GM10248 (cell line): ENCODE measurements at regions of chr6 and their contacts with region 1.

Region 1: DNA sequence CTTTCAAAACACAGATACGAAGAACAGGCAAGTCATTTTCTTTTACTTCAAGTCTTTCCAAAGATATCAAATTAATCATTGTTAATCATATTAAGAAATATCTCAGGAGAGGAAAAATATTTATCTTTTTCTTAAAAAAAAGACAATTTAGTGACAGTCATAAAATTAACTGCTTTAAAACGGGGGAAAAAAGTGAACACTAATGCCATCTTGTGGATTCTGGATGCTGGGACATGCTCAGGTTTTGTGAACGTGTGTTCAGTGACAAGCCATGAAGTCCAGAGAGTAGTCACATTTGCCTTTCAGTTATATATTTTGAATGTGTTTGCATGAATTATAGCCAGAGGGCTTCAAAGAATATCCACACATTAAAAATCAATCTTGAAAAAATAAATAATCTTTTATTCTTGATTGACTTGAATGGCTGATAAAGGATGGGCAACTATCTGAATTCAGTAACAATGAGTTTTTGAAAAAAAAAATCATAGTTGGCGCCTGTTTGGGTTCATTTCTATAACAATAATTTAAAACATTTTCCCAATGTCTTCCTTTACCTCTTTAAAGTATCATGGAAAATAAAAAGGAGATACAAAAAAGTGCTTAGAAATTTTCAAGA is 74.7 kb upstream of the NOX3 start:
- DNase-seq: peak; percentile 38
- CTCF ChIP-seq: peak; percentile 71

Region 2: GRCh38 chr6:155327326-155328073 is 202.8 kb before region 1 on chr6:
- CTCF ChIA-PET with region 1: interaction called, 13 read pairs
- POLR2A ChIA-PET with region 1: no interaction called
- DNase-seq: peak; percentile 32
- CTCF ChIP-seq: peak; percentile 60

Region 3: DNA sequence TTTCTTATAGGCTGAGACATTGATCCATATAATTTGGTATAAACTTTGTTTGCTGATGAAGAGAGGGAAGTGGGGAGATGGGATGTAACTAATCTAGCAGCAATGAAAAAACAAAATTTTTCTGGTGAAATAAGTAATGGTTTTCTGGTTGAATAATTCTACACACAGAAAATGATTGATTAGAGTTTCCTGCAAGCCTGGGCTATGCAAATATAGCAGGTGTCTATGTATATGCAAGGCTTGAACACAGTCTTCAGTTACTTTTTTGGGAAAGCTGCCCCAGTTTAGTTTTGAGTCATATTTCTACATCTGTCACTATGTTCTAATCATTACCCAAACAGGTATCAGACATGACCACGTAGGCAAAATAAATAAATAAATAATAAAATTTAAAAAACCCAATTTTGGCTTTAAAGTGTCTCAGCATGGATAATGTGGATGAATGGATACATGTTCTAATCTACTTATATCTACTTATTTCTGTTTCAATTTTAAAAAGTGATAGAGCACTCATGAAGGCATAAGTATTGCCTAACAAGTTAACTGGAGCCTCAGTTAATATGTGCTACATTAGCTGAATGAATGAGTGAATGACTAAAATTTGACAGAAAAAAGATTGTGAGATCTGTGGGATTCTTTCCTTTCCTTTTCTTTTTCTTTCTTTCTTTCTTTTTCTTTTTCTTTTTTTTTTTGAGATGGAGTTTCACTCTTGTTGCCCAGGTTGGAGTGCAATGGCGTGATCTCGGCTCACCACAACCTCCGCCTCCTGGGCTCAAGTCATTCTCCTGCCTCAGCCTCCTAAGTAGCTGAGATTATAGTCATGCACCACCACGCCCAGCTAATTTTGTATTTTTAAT is 178.8 kb before region 1 on chr6:
- CTCF ChIA-PET with region 1: no interaction called
- POLR2A ChIA-PET with region 1: no interaction called
- DNase-seq: peak; percentile 75
- CTCF ChIP-seq: no peak

Region 4: GRCh38 chr6:155519339-155519738 is 11.0 kb before region 1 on chr6:
- CTCF ChIA-PET with region 1: interaction called, 10 read pairs
- POLR2A ChIA-PET with region 1: no interaction called
- DNase-seq: no peak
- CTCF ChIP-seq: no peak

Region 5: GRCh38 chr6:155580904-155581303 is 50.6 kb after region 1 on chr6:
- CTCF ChIA-PET with region 1: no interaction called
- POLR2A ChIA-PET with region 1: no interaction called
- DNase-seq: no peak
- CTCF ChIP-seq: no peak